OCI-LY7 (cell line): ENCODE measurements at regions of chr3 and their contacts with region 1.

Region 1: GRCh38 chr3:179653096-179653797 is 407 bp downstream of the USP13 start:
- DNase-seq: peak; percentile 84
- H3K4me3 ChIP-seq: peak overlapping the region; percentile 96
- H3K27ac ChIP-seq: peak overlapping the region; percentile 81
- H3K4me1 ChIP-seq: peaks cover 32% of the 10 kb centered on the region
- CTCF ChIP-seq: peak; percentile 25; the same call in 1 of the 2 replicates

Region 2: GRCh38 chr3:179604321-179605078 is 48.7 kb before region 1 on chr3 and contains the starts of genes MRPL47 and NDUFB5:
- CTCF ChIA-PET with region 1: no interaction called
- POLR2A ChIA-PET with region 1: interaction called, 6 read pairs
- intact Hi-C with region 1: loop called (anchors 2 kb)
- DNase-seq: peak; percentile 96
- H3K4me3 ChIP-seq: peak within 1 kb of the TSS; percentile 87
- H3K27ac ChIP-seq: peak within 1 kb of the TSS; percentile 74
- H3K4me1 ChIP-seq: peaks cover 51% of the 10 kb centered on the region
- CTCF ChIP-seq: no peak
- total RNA-seq, gene MRPL47: 25.9 and 50.4 TPM in 2 replicates
- total RNA-seq, gene NDUFB5: 81.5 and 84.1 TPM in 2 replicates

Region 3: GRCh38 chr3:179716811-179717210 is 63.6 kb after region 1 on chr3:
- CTCF ChIA-PET with region 1: no interaction called
- POLR2A ChIA-PET with region 1: no interaction called
- intact Hi-C with region 1: no loop called
- DNase-seq: no peak
- H3K4me3 ChIP-seq: no peak overlapping the region
- H3K27ac ChIP-seq: no peak overlapping the region
- H3K4me1 ChIP-seq: no peaks in the 10 kb centered on the region
- CTCF ChIP-seq: no peak

Region 4: GRCh38 chr3:179956416-179956830 is 303.2 kb after region 1 on chr3:
- CTCF ChIA-PET with region 1: no interaction called
- POLR2A ChIA-PET with region 1: no interaction called
- intact Hi-C with region 1: loop called (anchors 5 kb)
- DNase-seq: peak; percentile 90
- H3K4me3 ChIP-seq: peak overlapping the region; percentile 35
- H3K27ac ChIP-seq: peak overlapping the region; percentile 74
- H3K4me1 ChIP-seq: peaks cover 67% of the 10 kb centered on the region
- CTCF ChIP-seq: no peak